Right ventricle myocardium inferior (tissue), 1 donor: ENCODE measurements at regions of chr22 and their contacts with region 1.

Region 1: GRCh38 chr22:43993027-43993760 is 30.9 kb upstream of the PARVB start:
- DNase-seq: no peak
- ATAC-seq: peak; percentile 70

Region 2: GRCh38 chr22:43862074-43862881 is 130.9 kb before region 1 on chr22 and contains the start of gene SULT4A1:
- intact Hi-C with region 1: no loop called
- DNase-seq: no peak
- ATAC-seq: no peak
- total RNA-seq, gene SULT4A1: 0.14 TPM

Region 3: GRCh38 chr22:44329179-44329796 is 336.1 kb after region 1 on chr22:
- intact Hi-C with region 1: loop called (anchors 10 kb)
- DNase-seq: no peak
- ATAC-seq: no peak

Region 4: GRCh38 chr22:44363272-44363979 is 370.2 kb after region 1 on chr22:
- intact Hi-C with region 1: loop called (anchors 10 kb)
- DNase-seq: peak; percentile 92
- ATAC-seq: peak; percentile 89

Region 5: DNA sequence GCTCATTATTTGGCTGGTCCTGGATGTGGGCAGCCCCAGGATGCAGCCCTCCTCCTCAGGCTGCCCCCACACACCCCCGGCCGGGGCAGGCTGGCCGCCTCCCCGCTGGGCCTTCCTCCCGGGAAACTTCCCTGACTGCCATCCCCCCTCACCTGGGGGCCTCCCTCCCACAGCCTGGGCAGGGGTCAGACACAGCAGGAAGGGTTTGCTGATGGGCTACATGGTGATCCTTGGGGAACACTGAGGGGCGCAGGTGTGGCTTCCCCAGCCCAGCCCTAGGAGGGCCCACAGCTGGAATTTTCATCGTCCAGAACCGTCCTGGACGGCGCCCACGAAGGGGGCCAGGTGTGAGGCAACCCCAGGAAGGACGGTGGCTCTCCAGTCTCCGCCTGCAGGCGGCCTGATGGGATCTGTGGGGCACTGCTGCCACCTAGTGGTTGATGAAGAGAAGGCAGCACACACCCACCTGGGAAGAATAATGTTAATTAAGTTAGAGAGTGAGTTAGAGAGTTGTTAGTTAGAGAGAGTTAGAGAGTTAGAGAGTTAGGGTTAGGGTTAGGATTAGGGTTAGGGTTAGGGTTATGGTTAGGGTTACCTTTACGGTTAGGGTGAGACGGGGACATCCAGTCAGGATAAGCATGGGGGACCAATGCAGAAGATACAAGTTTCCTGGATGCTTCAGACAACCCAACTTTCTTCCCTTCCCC is 632.9 kb after region 1 on chr22:
- intact Hi-C with region 1: loop called (anchors 1 kb)
- DNase-seq: no peak
- ATAC-seq: peak; percentile 66